ENCODE measurements at regions of chr9 and their contacts with region 1.

Region 1: GRCh38 chr9:120324996-120325642 is 254.8 kb downstream of the CDK5RAP2 start:
- DNase-seq: peak; percentile 34 to 67
- H3K4me3 ChIP-seq: no peak overlapping the region
- H3K27ac ChIP-seq: no peak overlapping the region
- H3K4me1 ChIP-seq: 0 out of 7 replicates have a peak, but pooled peaks cover 0 to 3% (median 0%) of the 10 kb centered on the region in 4 experiments
- H3K27me3 ChIP-seq: no peaks in the 10 kb centered on the region
- CTCF ChIP-seq: peak; percentile 63 to 85 (median 66)
- EP300 ChIP-seq: no peak
- POLR2A ChIP-seq: no peak
- RAD21 ChIP-seq: peak; percentile 72 to 79

Region 2: GRCh38 chr9:120312031-120312430 is 13.1 kb before region 1 on chr9:
- CTCF ChIA-PET with region 1: interaction called, 25 read pairs
- POLR2A ChIA-PET with region 1: no interaction called
- DNase-seq: no peak
- H3K4me3 ChIP-seq: no peak overlapping the region
- H3K27ac ChIP-seq: no peak overlapping the region
- H3K4me1 ChIP-seq: peaks cover 0 to 13% (median 3%) of the 10 kb centered on the region in 4 experiments; a peak in 5 of 7 replicates
- H3K27me3 ChIP-seq: no peaks in the 10 kb centered on the region
- CTCF ChIP-seq: no peak
- EP300 ChIP-seq: no peak
- POLR2A ChIP-seq: no peak
- RAD21 ChIP-seq: no peak

Region 3: DNA sequence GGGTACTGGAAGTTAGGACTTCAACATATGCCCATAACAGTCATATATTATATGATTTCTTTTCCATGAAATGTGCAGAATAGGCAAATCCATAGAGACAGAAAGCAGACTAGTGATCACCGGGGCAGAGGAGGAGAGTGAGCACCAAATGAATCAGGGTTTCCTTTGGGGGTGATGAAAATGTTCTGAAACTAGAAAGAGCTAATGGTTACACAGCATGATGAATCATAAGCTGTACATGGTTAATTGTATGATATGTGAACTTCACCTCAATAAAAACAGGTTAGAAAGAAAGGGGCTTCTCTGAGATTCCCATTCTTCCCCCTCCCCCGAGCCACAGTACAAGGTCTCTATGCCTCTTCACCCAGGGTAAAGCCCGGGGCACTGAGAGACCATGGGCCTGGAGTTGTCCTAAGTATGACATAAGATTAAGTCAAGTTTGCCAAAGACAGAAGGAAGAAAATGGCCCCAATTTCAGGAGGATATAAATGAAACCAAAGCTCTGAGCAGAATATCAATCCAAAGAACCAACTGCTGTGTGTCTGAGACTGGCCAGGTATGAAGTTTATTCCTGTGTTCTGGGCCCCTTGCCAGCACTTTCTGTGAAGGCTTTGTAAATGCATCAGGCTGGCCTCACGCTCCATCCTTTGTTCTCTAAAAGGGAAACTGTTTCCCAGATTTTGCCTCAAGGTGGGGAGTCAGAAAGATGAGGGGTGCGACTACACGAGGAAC is 11.1 kb after region 1 on chr9:
- CTCF ChIA-PET with region 1: interaction called, 39 read pairs
- POLR2A ChIA-PET with region 1: no interaction called
- DNase-seq: peak in 1 of 2 experiments; percentile 17
- H3K4me3 ChIP-seq: no peak overlapping the region
- H3K27ac ChIP-seq: no peak overlapping the region
- H3K4me1 ChIP-seq: no peaks in the 10 kb centered on the region
- H3K27me3 ChIP-seq: no peaks in the 10 kb centered on the region
- CTCF ChIP-seq: no peak
- EP300 ChIP-seq: no peak
- POLR2A ChIP-seq: no peak
- RAD21 ChIP-seq: no peak

Region 4: DNA sequence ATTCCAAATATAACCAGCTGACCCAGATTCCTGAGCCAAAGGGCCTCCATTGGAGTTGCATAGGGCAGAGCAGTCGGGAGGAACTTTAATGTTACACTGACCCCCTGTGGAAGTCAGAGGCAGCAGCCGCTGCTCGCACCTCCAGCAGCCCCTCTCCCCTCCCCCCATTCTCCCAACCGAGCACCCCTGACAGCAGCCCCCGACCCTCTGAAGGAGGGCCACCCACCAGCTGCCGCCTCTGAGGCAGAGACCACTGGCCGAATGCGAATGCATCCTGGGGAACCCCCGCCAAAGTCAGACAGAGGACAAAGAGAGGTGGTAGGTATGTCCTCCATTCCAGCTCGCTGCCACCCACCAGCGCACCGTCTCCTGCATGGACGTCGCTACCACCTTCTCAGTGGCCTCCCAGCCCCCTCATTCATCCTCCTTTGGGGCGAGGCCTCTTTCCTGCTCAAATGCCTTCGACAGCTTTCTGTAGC is 23.9 kb after region 1 on chr9:
- CTCF ChIA-PET with region 1: interaction called, 14 read pairs
- POLR2A ChIA-PET with region 1: no interaction called
- DNase-seq: peak; percentile 47 to 70
- H3K4me3 ChIP-seq: peak overlapping the region in 1 of 4 experiments; percentile 29; a peak in 1 of 8 replicates
- H3K27ac ChIP-seq: no peak overlapping the region
- H3K4me1 ChIP-seq: peaks cover 3 to 12% (median 5%) of the 10 kb centered on the region in 4 experiments; a peak in 6 of 7 replicates
- H3K27me3 ChIP-seq: no peaks in the 10 kb centered on the region
- CTCF ChIP-seq: peak; percentile 74 to 88 (median 81)
- EP300 ChIP-seq: 0 out of 3 replicates have a peak, but pooled peaks of 1 of the 2 experiments have one; percentile 5
- POLR2A ChIP-seq: no peak
- RAD21 ChIP-seq: peak; percentile 91 to 93

Region 5: GRCh38 chr9:120583958-120584369 is 258.8 kb after region 1 on chr9:
- CTCF ChIA-PET with region 1: no interaction called
- POLR2A ChIA-PET with region 1: no interaction called
- DNase-seq: no peak
- H3K4me3 ChIP-seq: no peak overlapping the region
- H3K27ac ChIP-seq: no peak overlapping the region
- H3K4me1 ChIP-seq: peaks cover 0 to 3% (median 3%) of the 10 kb centered on the region in 4 experiments; a peak in 3 of 7 replicates
- H3K27me3 ChIP-seq: no peaks in the 10 kb centered on the region; a peak in 1 of 7 replicates
- CTCF ChIP-seq: no peak
- EP300 ChIP-seq: no peak
- POLR2A ChIP-seq: no peak
- RAD21 ChIP-seq: no peak

Region 6: GRCh38 chr9:120610975-120611689 is 286.0 kb after region 1 on chr9:
- CTCF ChIA-PET with region 1: no interaction called
- POLR2A ChIA-PET with region 1: no interaction called
- DNase-seq: no peak
- H3K4me3 ChIP-seq: no peak overlapping the region
- H3K27ac ChIP-seq: no peak overlapping the region
- H3K4me1 ChIP-seq: no peaks in the 10 kb centered on the region
- H3K27me3 ChIP-seq: no peaks in the 10 kb centered on the region
- CTCF ChIP-seq: peak in 1 of 3 experiments; percentile 11; a peak in 2 of 4 replicates
- EP300 ChIP-seq: no peak
- POLR2A ChIP-seq: no peak
- RAD21 ChIP-seq: peak in 1 of 2 experiments; percentile 16; a peak in 1 of 4 replicates